Cardiac septum (tissue), 1 donor: ENCODE measurements at regions of chr22 and their contacts with region 1.

Region 1: DNA sequence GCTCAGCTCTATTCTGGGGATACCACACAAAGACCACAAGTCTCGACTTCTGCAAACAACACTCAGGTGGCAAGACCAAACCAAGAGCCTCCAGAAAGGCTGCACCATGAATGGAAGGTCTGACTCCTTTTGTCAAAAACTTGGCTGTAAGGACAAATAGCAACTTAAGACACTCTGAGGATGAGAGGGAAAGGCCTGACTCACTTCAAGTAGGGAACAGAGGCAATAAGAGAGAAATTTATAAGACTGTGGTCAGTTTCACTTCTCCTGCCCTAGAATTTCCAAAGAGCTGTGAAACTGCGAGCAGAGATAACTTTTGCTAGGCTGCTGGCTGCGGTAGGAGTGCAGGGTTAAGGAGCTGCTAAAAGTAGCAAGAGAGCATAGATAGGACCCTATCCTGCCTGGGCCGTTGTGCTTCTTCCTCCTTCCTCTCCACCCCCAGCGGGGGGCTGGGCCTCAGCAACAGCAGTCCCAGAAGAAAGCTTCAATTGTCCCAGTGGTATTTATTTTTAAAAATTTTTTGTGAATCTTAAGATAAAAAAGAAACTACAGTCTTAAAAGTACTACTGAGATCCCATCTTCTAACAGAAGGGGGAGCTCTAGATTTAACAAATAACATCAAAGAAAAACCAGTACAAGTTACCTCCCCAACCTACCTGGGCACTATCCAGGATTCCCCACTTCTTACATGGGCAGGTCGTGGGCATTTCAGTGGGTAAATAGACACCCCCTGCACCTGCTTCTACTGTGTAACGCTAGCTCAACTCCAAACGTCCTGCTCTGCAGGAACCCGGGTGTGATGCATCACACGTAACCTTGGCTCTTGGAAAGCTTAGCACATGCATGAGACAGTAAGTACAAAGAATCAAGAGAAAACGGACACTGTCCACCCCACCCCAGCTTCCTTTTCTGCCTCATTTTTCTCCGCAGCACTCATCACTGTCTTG is 66.4 kb downstream of the SGSM3 start:
- DNase-seq: no peak

Region 2: DNA sequence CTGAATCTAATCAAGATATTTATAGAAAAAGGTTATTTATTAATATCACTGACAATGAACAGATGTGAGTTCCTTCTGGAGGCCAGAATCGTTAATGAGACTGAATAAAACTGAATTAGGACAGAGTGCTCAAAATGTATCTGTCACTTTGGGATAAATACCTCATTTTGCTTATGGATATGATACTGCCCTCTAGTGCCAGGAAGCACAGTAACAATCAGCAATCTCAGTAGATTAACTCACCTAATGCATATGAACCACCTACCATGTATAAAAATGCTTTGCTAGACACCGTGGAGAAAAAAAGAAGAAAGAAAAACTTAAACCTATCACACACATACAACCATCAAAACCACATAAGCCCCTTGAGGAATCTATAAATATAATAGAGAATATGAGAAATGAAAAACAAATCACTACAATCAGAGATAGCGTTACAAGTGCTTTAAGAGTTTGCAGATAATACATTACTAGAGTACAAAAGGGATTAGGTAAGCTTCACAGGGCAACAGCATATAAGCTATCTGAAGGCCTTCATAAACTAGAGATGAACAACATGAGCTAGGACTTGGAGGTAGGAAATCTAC is 51.0 kb after region 1 on chr22:
- intact Hi-C with region 1: loop called (anchors 5 kb)
- DNase-seq: no peak

Region 3: GRCh38 chr22:40533712-40534378 is 97.1 kb after region 1 on chr22:
- intact Hi-C with region 1: no loop called
- DNase-seq: no peak

Region 4: DNA sequence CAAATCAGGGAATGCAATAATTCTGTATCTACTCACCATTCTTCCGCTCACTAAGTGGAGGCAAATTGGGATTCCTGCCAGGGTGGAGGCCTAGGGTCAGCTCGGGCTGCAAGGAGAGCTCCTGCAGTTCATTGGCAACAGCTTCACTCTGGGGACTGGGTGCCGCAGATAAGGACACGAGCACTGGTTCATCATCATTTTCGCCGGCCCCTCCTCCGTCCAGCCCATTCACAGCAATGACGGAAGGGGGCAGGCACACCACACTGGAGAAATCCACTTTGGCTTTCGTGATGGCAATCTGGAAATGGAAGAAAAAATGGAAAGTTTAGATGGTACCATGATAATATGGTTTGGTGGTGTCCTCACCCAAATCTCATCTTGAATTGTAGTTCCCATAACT is 115.3 kb after region 1 on chr22:
- intact Hi-C with region 1: loop called (anchors 10 kb)
- DNase-seq: peak; percentile 81

Region 5: DNA sequence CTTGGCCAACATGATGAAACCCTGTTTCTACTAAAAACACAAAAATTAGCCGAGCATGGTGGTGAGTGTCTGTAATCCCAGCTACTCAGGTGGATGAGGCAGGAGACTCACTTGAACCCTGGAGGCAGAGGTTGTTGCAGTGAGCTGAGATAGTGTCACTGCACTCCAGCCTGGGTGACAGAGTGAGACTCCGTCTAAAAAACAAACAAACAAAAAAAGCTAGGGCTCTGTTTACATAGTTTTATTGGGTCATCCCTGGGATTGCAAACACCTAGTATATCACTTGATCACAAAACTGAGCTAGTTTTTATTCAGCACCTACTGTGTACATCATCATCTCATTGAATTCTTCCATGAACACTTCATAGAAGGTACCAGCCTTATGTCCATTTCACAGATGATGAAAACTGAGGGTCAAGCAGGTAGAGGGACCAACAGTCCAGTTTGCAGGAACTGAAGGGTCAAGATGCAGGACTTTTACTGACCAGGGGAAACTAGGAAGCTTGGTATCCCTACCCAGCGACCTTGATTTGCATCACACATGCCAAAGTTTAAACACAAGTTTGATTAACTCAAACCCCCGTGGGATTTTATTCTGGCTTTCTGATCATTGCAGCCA is 208.9 kb after region 1 on chr22:
- intact Hi-C with region 1: loop called (anchors 1 kb)
- DNase-seq: no peak

Region 6: DNA sequence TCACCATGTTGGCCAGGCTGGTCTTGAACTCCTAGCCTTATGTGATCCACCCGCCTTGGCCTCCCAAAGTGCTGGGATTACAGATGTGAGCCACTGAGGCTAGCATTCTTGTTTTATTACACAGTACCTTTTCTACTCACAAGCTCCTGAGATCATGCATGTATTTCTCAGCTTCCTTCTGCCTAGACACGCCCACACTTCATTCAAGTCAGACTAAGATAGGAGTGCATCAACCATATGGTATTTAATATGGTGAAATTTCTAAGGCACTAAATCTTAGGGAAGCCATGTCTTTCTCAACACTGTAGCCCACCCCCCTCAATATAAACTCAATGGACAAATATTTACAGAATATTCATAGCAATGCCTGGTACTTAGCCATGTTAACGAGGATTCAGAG is 320.3 kb after region 1 on chr22:
- intact Hi-C with region 1: loop called (anchors 5 kb)
- DNase-seq: no peak